CD4-positive, alpha-beta memory T cell (primary cell): ENCODE measurements at regions of chr7 and their contacts with region 1.

Region 1: GRCh38 chr7:50206453-50207250 is 97.9 kb upstream of the IKZF1 start:
- DNase-seq: peak; percentile 63 to 91 (median 65)
- H3K4me3 ChIP-seq: peak overlapping the region; percentile 4 to 14
- H3K4me3 Mint-ChIP-seq: peak overlapping the region; percentile 73 to 88 (median 81)
- H3K27ac ChIP-seq: peak overlapping the region; percentile 18
- H3K27ac Mint-ChIP-seq: peak overlapping the region; percentile 90 to 97 (median 93)
- H3K4me1 ChIP-seq: peaks cover 79% of the 10 kb centered on the region
- H3K4me1 Mint-ChIP-seq: peaks cover 63 to 88% (median 72%) of the 10 kb centered on the region in 4 donors
- H3K27me3 ChIP-seq: no peaks in the 10 kb centered on the region
- H3K27me3 Mint-ChIP-seq: no peaks in the 10 kb centered on the region

Region 2: DNA sequence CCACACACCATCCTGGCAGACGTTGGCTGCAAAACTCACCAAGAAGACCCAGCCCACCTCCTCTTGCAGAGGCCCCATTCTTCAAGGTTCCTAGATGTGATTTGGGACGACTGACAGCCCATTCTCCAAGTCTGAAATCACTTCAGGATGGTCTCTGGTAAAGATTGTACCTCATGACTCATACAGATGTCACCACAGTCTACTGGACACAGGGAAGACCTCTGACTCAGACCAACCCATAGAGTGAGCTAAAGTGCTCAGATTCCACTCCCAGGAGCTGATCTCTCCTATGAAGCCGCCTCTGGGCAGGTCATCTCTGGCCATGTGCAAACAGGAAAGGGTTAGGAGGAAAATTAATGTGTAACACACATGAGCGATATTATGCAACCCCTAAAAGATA is 535.7 kb before region 1 on chr7:
- CTCF ChIA-PET with region 1: no interaction called
- POLR2A ChIA-PET with region 1: no interaction called
- intact Hi-C with region 1: no loop called
- DNase-seq: no peak
- H3K4me3 ChIP-seq: no peak overlapping the region
- H3K4me3 Mint-ChIP-seq: no peak overlapping the region
- H3K27ac ChIP-seq: no peak overlapping the region
- H3K27ac Mint-ChIP-seq: no peak overlapping the region
- H3K4me1 ChIP-seq: no peaks in the 10 kb centered on the region
- H3K4me1 Mint-ChIP-seq: no peaks in the 10 kb centered on the region
- H3K27me3 ChIP-seq: no peaks in the 10 kb centered on the region
- H3K27me3 Mint-ChIP-seq: no peaks in the 10 kb centered on the region

Region 3: DNA sequence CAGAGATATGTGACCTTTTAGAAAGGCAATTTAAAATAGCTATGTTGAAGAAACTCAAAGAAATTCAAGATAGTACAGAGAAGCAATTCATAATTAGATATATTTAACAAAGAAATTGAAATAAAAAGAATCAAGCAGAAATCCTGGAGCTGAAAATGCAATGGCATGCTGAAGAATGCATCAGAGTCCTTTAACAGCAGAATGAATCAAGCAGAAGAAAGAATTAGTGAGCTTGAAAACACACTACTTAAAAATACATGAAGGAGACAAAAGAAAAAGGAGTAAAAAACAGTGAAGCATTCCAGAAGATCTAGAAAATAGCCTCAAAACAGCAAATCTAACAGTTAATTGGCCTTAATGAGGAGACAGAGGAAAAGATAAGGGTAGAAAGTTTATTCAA is 133.6 kb before region 1 on chr7:
- CTCF ChIA-PET with region 1: no interaction called
- POLR2A ChIA-PET with region 1: no interaction called
- intact Hi-C with region 1: no loop called
- DNase-seq: no peak
- H3K4me3 ChIP-seq: no peak overlapping the region
- H3K4me3 Mint-ChIP-seq: no peak overlapping the region
- H3K27ac ChIP-seq: no peak overlapping the region
- H3K27ac Mint-ChIP-seq: peak overlapping the region in 1 of 7 donors; percentile 49
- H3K4me1 ChIP-seq: peaks cover 9% of the 10 kb centered on the region
- H3K4me1 Mint-ChIP-seq: peaks cover 15 to 21% (median 18%) of the 10 kb centered on the region in 4 donors
- H3K27me3 ChIP-seq: no peaks in the 10 kb centered on the region
- H3K27me3 Mint-ChIP-seq: peaks cover 4 to 23% of the 10 kb centered on the region in 2 donors

Region 4: DNA sequence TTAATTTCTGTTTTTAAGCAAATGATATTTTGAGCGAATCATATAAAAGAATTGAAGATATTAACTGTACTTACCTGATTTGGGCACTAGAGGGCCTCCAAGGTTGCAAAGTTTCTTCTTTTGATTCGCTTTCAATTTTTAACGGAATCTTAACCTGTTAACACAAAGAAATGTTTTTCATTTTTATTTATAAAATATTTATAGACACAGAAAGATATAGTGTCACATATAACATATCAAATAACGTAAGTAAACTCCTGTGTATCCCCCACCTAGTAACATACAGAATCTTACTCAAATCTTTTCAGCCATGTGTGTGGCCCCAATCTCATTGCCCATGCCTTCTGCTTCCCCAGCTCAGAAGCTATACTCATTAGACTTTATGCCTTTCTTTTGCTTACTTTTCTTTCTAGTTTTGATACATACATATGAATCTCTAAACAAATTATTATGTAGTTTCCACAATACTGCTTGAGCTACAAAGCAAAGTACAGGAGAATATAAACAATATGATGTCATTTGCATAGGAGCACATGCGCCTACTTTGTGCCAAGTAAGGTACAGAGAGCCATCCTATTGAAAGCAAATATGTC is 64.1 kb before region 1 on chr7:
- CTCF ChIA-PET with region 1: interaction called, 54 read pairs
- POLR2A ChIA-PET with region 1: interaction called, 8 read pairs
- intact Hi-C with region 1: loop called (anchors 1 kb)
- DNase-seq: peak in 4 of 5 donors; percentile 57 to 63 (median 60)
- H3K4me3 ChIP-seq: no peak overlapping the region
- H3K4me3 Mint-ChIP-seq: peak overlapping the region; percentile 3 to 77 (median 49)
- H3K27ac ChIP-seq: no peak overlapping the region
- H3K27ac Mint-ChIP-seq: peak overlapping the region in 6 of 7 donors; percentile 0 to 93 (median 36)
- H3K4me1 ChIP-seq: peaks cover 26% of the 10 kb centered on the region
- H3K4me1 Mint-ChIP-seq: peaks cover 11 to 25% (median 18%) of the 10 kb centered on the region in 4 donors
- H3K27me3 ChIP-seq: no peaks in the 10 kb centered on the region
- H3K27me3 Mint-ChIP-seq: peaks cover 0 to 2% of the 10 kb centered on the region in 2 donors

Region 5: DNA sequence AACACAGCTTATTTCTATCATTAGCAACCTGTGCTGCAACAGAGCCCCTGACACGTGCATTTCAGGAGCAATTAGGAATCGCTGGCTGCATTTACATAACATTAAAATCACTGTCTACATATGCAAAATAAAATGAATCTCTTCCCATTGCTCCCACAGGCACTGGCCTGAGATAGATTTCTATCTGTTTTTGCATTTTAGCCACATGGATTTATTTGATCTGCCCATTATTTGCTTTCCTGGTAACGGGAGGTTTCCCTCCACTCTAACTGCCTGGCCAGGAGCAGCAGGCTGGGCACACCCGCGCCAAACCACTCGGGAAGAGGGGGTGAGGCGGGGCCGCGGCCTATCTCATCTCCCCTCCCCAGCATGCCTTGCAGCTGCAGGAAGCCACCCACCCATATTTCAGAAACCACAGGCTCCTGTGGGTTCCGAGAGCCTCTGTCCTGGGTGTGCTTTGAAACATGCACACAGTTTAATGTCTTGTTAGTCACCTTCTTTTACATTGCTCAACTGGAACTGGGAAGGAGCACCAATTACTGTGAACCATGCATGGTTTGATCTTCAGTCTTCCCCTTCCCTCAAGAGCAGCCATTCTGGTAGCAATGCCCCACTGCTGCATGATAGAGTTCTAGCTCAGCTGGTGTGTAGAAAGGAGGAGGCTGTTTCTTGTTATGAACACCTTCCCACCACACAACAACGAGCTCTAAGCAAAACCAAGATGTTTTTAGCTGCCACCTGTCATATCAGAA is 60.2 kb after region 1 on chr7:
- CTCF ChIA-PET with region 1: interaction called, 134 read pairs
- POLR2A ChIA-PET with region 1: interaction called, 106 read pairs
- intact Hi-C with region 1: loop called (anchors 1 kb)
- DNase-seq: peak; percentile 79 to 89 (median 83)
- H3K4me3 ChIP-seq: peak overlapping the region in 1 of 2 donors; percentile 16
- H3K4me3 Mint-ChIP-seq: peak overlapping the region; percentile 61 to 93 (median 82)
- H3K27ac ChIP-seq: peak overlapping the region; percentile 49
- H3K27ac Mint-ChIP-seq: peak overlapping the region; percentile 91 to 97 (median 96)
- H3K4me1 ChIP-seq: peaks cover 100% of the 10 kb centered on the region
- H3K4me1 Mint-ChIP-seq: peaks cover 86 to 100% (median 93%) of the 10 kb centered on the region in 4 donors
- H3K27me3 ChIP-seq: no peaks in the 10 kb centered on the region
- H3K27me3 Mint-ChIP-seq: no peaks in the 10 kb centered on the region

Region 6: DNA sequence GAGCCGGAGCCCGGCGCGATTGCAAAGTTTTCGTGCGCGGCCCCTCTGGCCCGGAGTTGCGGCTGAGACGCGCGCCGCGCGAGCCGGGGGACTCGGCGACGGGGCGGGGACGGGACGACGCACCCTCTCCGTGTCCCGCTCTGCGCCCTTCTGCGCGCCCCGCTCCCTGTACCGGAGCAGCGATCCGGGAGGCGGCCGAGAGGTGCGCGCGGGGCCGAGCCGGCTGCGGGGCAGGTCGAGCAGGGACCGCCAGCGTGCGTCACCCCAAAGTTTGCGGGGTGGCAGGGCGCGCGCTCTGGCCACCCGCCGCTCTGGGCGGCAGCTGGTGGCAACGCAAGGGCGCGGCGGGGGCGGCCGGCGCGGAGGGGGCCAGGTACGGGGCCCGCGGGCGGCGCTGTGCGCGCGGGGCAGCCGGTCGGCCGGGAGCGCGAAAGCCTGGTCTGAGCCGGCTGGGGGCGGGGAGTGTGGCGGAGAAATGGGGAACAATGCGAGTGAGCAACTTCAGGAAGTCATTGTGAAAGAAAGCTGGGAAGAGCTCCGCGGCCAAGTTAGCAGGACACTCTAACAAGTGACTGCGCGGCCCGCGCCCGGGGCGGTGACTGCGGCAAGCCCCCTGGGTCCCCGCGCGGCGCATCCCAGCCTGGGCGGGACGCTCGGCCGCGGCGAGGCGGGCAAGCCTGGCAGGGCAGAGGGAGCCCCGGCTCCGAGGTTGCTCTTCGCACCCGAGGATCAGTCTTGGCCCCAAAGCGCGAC is 97.7 kb after region 1 on chr7 and contains the start of gene IKZF1:
- CTCF ChIA-PET with region 1: interaction called, 173 read pairs
- POLR2A ChIA-PET with region 1: interaction called, 675 read pairs
- intact Hi-C with region 1: loop called (anchors 1 kb)
- DNase-seq: peak; percentile 53 to 66 (median 61)
- H3K4me3 ChIP-seq: peak within 1 kb of the TSS; percentile 86 to 96
- H3K4me3 Mint-ChIP-seq: peak within 1 kb of the TSS; percentile 97 to 100 (median 100)
- H3K27ac ChIP-seq: peak within 1 kb of the TSS; percentile 90
- H3K27ac Mint-ChIP-seq: peak within 1 kb of the TSS; percentile 90 to 99 (median 96)
- H3K4me1 ChIP-seq: peaks cover 53% of the 10 kb centered on the region
- H3K4me1 Mint-ChIP-seq: peaks cover 33 to 71% (median 47%) of the 10 kb centered on the region in 4 donors
- H3K27me3 ChIP-seq: no peaks in the 10 kb centered on the region
- H3K27me3 Mint-ChIP-seq: no peaks in the 10 kb centered on the region
- total RNA-seq, gene IKZF1: 474 to 479 TPM

Region 7: DNA sequence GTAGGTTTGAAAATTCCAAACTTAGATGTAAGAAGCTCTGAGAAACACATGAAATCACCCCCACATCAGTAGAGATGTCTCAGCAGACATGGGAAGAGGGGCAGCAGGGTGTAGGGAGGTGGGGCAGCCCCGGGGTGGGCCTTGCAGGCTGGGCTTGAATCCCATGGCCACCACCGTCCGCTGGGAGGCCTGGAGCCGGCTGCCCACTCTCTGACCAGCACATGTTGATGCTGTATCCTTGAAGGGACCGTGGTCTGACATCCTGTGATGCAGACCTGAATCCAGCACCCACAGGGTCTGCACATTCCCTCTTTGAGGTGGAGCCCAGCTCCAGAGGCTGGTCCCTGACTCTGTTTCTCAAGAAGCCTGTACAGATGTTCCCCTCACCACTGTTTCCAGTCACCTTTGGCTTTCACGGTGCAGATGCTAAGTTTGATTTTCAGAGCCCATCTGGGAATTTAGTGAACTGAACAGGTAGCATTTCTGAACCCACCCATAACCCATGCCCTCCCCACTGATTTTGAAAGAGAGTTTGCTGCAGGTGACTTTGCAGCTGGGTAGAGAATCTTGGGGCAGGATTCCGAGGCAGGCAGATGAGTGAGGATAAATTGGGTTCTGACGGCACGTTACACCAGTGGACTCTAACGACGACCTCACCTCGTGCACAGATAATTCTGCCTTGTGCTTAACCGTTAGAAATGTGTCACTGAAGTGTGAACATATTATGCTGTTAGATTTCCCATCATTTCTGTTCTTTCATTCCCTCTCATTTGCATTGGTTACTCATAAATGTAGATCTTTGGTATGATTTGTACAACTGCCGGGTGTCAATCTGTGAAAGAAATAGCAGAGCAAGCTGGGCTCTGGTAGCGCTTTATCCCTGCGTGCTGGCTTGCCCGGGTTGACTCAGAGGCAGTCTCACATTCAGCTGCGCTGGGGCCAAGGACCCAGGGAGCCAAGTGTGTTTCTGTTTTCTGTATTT is 143.6 kb after region 1 on chr7:
- CTCF ChIA-PET with region 1: interaction called, 24 read pairs
- POLR2A ChIA-PET with region 1: interaction called, 19 read pairs
- intact Hi-C with region 1: no loop called
- DNase-seq: peak; percentile 46 to 89 (median 52)
- H3K4me3 ChIP-seq: peak overlapping the region in 1 of 2 donors; percentile 29
- H3K4me3 Mint-ChIP-seq: peak overlapping the region; percentile 69 to 88 (median 78)
- H3K27ac ChIP-seq: peak overlapping the region; percentile 96
- H3K27ac Mint-ChIP-seq: peak overlapping the region in 6 of 7 donors; percentile 97 to 100 (median 98)
- H3K4me1 ChIP-seq: peaks cover 100% of the 10 kb centered on the region
- H3K4me1 Mint-ChIP-seq: peaks cover 79 to 98% (median 92%) of the 10 kb centered on the region in 4 donors
- H3K27me3 ChIP-seq: no peaks in the 10 kb centered on the region
- H3K27me3 Mint-ChIP-seq: no peaks in the 10 kb centered on the region

Region 8: GRCh38 chr7:50397320-50397970 is 190.8 kb after region 1 on chr7:
- CTCF ChIA-PET with region 1: interaction called, 21 read pairs
- POLR2A ChIA-PET with region 1: interaction called, 7 read pairs
- intact Hi-C with region 1: no loop called
- DNase-seq: peak; percentile 42 to 77 (median 54)
- H3K4me3 ChIP-seq: no peak overlapping the region
- H3K4me3 Mint-ChIP-seq: peak overlapping the region in 6 of 8 donors; percentile 21 to 72 (median 49)
- H3K27ac ChIP-seq: peak overlapping the region; percentile 56
- H3K27ac Mint-ChIP-seq: peak overlapping the region; percentile 80 to 99 (median 91)
- H3K4me1 ChIP-seq: peaks cover 75% of the 10 kb centered on the region
- H3K4me1 Mint-ChIP-seq: peaks cover 59 to 79% (median 67%) of the 10 kb centered on the region in 4 donors
- H3K27me3 ChIP-seq: no peaks in the 10 kb centered on the region
- H3K27me3 Mint-ChIP-seq: no peaks in the 10 kb centered on the region

Region 9: DNA sequence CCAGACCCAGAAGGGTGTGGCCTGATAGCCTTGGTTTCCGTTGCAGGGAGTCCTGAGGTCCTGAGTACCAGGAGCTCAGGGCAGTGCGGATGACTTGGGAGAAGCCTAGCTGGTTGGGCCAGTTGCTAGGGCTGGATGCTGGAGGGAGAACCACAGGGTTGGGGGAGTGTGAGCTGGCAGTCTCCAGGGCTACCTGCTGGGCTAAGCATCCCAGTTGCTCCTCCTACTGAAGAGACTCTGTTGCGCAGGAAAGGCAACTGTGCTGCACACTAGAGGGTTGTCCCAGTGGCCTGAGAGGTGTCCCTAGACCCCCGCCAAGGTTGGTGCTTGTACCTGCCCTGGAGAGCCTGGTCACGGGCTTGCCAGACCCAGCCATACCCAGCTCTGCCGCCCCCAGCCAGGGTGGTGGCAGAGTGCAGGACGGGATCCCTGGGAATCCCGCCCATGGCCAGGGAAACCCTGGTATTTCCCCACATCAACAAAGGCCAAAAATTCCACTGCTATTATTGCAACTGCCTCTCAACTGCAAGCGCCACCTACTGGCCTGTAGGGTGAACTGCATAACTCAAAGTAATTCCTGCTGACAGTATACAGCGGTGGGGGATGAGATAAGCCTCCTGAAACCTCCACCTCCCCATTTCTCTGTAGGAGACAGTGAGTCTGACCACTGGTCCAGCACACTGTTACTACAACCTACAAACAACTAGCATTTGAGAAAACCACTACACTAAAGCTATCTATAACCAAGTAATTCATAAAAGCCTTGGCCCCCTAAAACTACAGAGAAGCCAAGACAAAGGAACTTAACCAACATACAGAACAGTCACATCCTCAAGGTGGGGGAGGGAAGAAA is 426.1 kb after region 1 on chr7:
- CTCF ChIA-PET with region 1: interaction called, 4 read pairs
- POLR2A ChIA-PET with region 1: no interaction called
- intact Hi-C with region 1: loop called (anchors 5 kb)
- DNase-seq: peak; percentile 57 to 62 (median 60)
- H3K4me3 ChIP-seq: no peak overlapping the region
- H3K4me3 Mint-ChIP-seq: no peak overlapping the region
- H3K27ac ChIP-seq: no peak overlapping the region
- H3K27ac Mint-ChIP-seq: peak overlapping the region in 1 of 7 donors; percentile 15
- H3K4me1 ChIP-seq: no peaks in the 10 kb centered on the region
- H3K4me1 Mint-ChIP-seq: peaks cover 3 to 6% (median 5%) of the 10 kb centered on the region in 4 donors
- H3K27me3 ChIP-seq: no peaks in the 10 kb centered on the region
- H3K27me3 Mint-ChIP-seq: peaks cover 3 to 5% of the 10 kb centered on the region in 2 donors